ENCODE measurements at regions of chr18 and their contacts with region 1.

Region 1: DNA sequence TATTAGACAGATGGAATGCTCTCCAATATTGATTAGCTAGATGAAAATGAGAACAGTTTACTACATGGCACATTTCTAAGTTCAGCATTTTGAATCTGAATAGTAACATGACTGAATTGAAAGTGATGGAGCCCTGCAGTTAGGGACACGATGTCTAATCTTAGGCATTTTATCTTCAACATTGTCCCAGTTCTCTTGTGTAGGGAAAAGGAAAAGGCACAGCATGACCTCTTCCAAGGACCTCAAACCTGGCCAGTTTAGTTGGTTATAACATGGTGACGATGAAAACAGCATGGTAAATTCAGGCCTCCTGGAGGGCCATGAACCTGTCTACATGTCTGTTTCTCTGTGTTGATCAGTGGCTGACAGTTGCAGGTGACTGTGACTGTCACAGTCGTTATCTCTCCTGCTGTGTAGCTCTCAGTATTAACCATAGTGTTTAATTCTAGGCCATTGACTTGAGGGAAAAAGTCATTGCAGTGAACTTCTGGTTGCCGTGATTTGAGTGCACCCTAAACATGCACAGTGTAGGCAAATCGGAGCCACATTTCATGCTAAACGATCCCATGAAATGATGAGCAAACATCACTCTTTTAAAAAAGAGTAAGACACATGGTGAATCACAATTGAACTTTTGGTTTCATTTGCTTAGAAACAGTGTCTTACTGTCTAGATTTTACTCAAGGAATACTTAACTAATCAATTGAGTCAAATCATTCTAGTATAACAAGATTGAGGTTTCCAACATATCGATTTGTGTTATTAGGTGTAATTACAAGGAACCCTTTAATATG is 129.7 kb downstream of the PHLPP1 start:
- DNase-seq: peak; percentile 20
- H3K4me3 Mint-ChIP-seq: peak overlapping the region; percentile 70
- H3K27ac Mint-ChIP-seq: peak overlapping the region; percentile 90
- H3K4me1 Mint-ChIP-seq: peaks cover 54% of the 10 kb centered on the region
- H3K27me3 Mint-ChIP-seq: no peaks in the 10 kb centered on the region

Region 2: DNA sequence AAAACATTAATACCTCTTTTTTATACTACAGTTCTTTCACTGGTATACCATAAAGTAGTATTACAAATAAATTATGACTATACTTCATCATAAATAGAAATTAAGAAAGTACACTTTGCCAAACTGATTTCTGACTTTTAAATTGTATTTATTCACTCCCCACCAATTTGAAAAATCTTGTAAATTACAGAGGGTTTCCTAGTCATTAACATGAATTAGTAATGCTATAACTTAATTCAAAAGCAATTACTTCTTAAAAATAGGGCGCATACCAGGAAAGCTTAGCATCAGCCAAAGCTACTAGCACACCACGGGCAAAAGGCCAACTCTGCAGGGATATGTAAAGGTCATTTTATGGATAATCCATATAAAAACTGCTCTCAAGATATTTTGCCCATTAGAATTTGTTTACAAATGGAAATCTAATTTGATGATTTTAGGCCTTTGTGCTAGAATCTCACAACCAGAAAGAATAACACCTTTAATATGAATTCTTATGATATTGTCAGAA is 800.5 kb before region 1 on chr18:
- intact Hi-C with region 1: no loop called
- DNase-seq: no peak
- H3K4me3 Mint-ChIP-seq: no peak overlapping the region
- H3K27ac Mint-ChIP-seq: no peak overlapping the region
- H3K4me1 Mint-ChIP-seq: no peaks in the 10 kb centered on the region
- H3K27me3 Mint-ChIP-seq: no peaks in the 10 kb centered on the region

Region 3: DNA sequence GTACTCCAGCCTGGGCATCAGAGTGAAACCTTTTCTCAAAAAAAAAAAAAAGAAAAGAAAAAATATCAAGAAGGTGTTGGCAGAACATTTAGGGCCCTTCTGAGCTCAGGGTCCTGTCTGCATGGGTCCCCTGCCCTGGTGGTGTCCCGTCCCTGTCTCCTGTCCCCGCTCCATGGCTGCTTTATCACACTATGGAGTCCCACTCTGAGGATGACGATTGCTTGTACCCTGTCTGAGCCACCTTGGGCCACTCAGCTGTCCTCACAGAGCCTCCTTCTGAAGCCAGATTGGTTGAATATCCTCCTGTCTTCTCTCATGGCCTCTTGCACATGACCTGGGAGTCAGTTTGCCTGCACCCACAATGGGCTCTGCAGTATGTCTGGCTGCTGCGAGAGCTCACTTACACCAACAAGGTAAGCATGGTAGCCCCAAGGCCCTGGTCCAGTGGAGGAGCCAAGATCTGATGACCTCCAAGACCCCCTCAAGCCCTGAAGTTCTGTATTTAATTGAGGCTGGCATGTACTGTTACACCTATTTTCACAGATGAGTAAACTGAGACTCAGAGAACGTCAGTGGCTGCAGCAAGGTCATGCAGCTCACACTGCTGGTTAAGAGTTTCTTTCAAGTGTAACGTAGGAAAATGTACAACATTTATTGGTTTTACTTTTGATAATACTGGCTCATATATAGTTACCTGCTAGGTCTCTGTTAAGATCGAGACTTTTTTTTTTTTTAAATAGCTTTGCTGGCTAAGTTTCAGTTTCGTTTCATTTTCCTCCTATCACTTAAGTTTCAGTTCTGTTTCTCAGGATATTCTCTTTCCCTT is 339.2 kb before region 1 on chr18:
- intact Hi-C with region 1: loop called (anchors 5 kb)
- DNase-seq: peak; percentile 29
- H3K4me3 Mint-ChIP-seq: peak overlapping the region; percentile 73
- H3K27ac Mint-ChIP-seq: peak overlapping the region; percentile 97
- H3K4me1 Mint-ChIP-seq: peaks cover 20% of the 10 kb centered on the region
- H3K27me3 Mint-ChIP-seq: no peaks in the 10 kb centered on the region

Region 4: DNA sequence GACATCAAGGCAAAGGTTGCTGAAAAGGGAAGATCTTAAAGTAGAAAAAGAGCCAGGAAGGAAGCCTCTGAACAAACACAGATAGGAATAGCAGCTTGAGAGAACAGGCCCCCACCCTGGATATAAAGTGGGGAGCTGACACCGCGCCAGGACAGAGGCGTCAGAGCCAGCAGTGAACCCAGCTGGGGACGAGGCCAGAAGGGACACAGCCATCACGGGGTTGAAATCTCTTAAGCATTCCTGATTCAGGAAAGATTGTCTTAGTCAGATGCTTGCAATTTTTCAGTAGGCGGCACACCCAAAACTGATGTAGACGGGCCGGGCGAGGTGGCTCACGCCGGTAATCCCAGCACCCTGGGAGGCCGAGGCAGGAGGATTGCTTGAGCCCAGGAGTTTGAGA is 223.5 kb before region 1 on chr18:
- intact Hi-C with region 1: no loop called
- DNase-seq: no peak
- H3K4me3 Mint-ChIP-seq: no peak overlapping the region
- H3K27ac Mint-ChIP-seq: no peak overlapping the region
- H3K4me1 Mint-ChIP-seq: no peaks in the 10 kb centered on the region
- H3K27me3 Mint-ChIP-seq: peaks cover 18% of the 10 kb centered on the region

Region 5: GRCh38 chr18:62714671-62715435 is 130.2 kb before region 1 on chr18:
- intact Hi-C with region 1: loop called (anchors 1 kb)
- DNase-seq: peak; percentile 90
- H3K4me3 Mint-ChIP-seq: peak overlapping the region; percentile 80
- H3K27ac Mint-ChIP-seq: peak overlapping the region; percentile 76
- H3K4me1 Mint-ChIP-seq: peaks cover 30% of the 10 kb centered on the region
- H3K27me3 Mint-ChIP-seq: peaks cover 12% of the 10 kb centered on the region

Region 6: GRCh38 chr18:62784966-62785413 is 60.1 kb before region 1 on chr18:
- intact Hi-C with region 1: loop called (anchors 1 kb)
- DNase-seq: no peak
- H3K4me3 Mint-ChIP-seq: peak overlapping the region; percentile 38
- H3K27ac Mint-ChIP-seq: peak overlapping the region; percentile 93
- H3K4me1 Mint-ChIP-seq: peaks cover 77% of the 10 kb centered on the region
- H3K27me3 Mint-ChIP-seq: no peaks in the 10 kb centered on the region

Region 7: GRCh38 chr18:62795813-62796212 is 49.2 kb before region 1 on chr18:
- intact Hi-C with region 1: no loop called
- DNase-seq: no peak
- H3K4me3 Mint-ChIP-seq: no peak overlapping the region
- H3K27ac Mint-ChIP-seq: no peak overlapping the region
- H3K4me1 Mint-ChIP-seq: peaks cover 37% of the 10 kb centered on the region
- H3K27me3 Mint-ChIP-seq: no peaks in the 10 kb centered on the region

Region 8: GRCh38 chr18:63155169-63155852 is 310.3 kb after region 1 on chr18:
- intact Hi-C with region 1: loop called (anchors 1 kb)
- DNase-seq: peak; percentile 75
- H3K4me3 Mint-ChIP-seq: peak overlapping the region; percentile 71
- H3K27ac Mint-ChIP-seq: peak overlapping the region; percentile 99
- H3K4me1 Mint-ChIP-seq: peaks cover 93% of the 10 kb centered on the region
- H3K27me3 Mint-ChIP-seq: no peaks in the 10 kb centered on the region